GM23248 (cell line): ENCODE measurements at regions of chr2 and their contacts with region 1.

Region 1: GRCh38 chr2:209960676-209961630 is 41.5 kb upstream of the RPE start:
- DNase-seq: peak; percentile 73
- H3K4me3 ChIP-seq: no peak overlapping the region
- H3K27ac ChIP-seq: no peak overlapping the region
- H3K4me1 ChIP-seq: no peaks in the 10 kb centered on the region
- H3K27me3 ChIP-seq: no peaks in the 10 kb centered on the region

Region 2: DNA sequence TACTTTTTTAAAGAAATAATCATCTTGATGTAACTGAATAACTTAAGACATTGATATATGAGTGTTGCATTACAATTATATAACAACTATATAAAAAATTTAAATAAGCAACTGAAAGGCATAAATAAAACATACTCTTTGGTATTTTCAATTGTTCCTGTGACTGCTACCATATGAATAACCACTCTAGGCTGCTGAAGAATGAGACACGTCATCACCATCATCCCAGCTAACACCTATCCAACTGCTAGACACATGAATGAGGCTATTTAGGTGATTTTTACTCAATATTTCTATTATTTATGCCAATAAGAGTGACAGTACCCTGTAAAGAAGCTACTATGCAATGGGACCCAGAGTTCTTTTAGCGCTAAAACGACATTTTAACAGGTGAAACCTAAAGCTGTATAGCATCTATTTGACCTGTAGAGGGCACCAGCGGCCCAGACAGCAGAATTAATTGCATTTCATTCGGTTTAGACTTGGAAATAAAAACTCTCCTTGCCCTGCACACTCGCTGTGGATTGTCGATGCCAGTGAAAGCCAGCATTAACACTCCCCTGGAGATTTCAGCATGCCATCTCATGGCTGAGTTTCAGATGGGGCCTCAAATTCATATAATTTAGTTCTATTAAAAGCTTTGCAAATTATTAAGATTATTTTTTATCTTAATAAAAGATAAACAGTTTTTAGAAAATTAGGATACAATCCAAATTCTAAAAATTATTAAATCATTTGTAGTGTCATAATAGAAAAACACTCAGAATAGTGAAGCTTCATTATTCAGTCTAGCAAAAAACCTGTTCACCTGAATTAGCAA is 626.5 kb before region 1 on chr2:
- in situ Hi-C with region 1: loop called (anchors 25 kb)
- DNase-seq: peak; percentile 72
- H3K4me3 ChIP-seq: no peak overlapping the region
- H3K27ac ChIP-seq: no peak overlapping the region
- H3K4me1 ChIP-seq: no peaks in the 10 kb centered on the region
- H3K27me3 ChIP-seq: peaks cover 4% of the 10 kb centered on the region; the same call in 1 of the 2 replicates